ENCODE measurements at regions of chr19 and their contacts with region 1.

Region 1: GRCh38 chr19:1812469-1813196 is 557 bp upstream of the ATP8B3 start:
- DNase-seq: peak; percentile 93 to 96
- H3K4me3 ChIP-seq: peak overlapping the region in 2 of 3 donors; percentile 33 to 39
- H3K27ac ChIP-seq: peak overlapping the region in 2 of 3 donors; percentile 51 to 52
- H3K4me1 ChIP-seq: peaks cover 14 to 19% of the 10 kb centered on the region in 2 donors
- H3K27me3 ChIP-seq: no peaks in the 10 kb centered on the region
- CTCF ChIP-seq: peak in 4 of 6 experiments; percentile 42 to 55 (median 48)
- POLR2A ChIP-seq: peak in 1 of 2 donors; percentile 35

Region 2: DNA sequence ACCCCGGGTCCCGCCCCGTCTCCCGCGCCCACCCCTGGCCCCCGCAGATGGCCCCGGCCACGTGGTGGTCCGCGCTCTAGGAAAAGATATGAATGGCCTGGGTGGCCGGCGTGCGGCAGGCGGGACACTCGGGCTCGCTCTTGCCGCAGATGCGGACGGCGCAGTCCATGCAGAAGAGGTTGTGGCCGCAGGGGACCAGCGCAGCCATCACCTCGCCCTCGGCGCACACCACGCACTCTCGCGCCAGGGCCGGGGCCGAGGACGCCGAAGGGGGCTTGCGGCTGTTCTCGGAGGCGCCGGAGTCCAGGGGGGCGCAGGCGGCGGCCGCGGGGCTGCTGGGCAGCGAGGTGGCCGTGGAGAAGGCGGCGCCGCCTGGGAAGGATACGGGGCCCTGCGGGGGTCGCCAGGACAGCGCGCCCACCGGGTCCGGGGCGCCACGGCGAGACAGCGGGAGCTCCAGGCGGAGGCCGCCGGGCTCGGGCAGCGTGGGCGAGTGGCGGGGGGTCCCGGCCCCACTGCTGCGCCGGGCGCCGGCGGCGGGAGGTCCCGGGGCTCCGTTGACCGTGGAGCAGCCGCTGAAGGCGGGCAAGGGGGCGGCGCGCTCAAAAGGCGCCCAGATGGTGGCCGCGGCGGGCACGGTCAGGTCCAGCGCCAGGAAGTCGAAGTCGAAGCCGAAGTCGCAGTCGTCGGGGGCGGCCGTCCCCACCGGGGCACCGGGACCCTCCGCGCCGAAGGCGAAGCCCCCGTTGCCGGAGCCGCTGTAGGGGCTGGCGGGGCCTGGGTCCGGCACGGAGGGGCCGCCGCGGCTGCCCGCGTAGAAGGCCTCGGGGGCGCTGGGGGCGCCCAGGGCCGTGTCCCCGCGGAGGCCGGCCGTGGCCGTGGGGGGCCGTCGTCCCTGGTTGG is 256.9 kb before region 1 on chr19:
- intact Hi-C with region 1: loop called (anchors 10 kb)
- DNase-seq: no peak
- H3K4me3 ChIP-seq: no peak overlapping the region
- H3K27ac ChIP-seq: no peak overlapping the region
- H3K4me1 ChIP-seq: no peaks in the 10 kb centered on the region
- H3K27me3 ChIP-seq: no peaks in the 10 kb centered on the region
- CTCF ChIP-seq: no peak
- POLR2A ChIP-seq: no peak

Region 3: DNA sequence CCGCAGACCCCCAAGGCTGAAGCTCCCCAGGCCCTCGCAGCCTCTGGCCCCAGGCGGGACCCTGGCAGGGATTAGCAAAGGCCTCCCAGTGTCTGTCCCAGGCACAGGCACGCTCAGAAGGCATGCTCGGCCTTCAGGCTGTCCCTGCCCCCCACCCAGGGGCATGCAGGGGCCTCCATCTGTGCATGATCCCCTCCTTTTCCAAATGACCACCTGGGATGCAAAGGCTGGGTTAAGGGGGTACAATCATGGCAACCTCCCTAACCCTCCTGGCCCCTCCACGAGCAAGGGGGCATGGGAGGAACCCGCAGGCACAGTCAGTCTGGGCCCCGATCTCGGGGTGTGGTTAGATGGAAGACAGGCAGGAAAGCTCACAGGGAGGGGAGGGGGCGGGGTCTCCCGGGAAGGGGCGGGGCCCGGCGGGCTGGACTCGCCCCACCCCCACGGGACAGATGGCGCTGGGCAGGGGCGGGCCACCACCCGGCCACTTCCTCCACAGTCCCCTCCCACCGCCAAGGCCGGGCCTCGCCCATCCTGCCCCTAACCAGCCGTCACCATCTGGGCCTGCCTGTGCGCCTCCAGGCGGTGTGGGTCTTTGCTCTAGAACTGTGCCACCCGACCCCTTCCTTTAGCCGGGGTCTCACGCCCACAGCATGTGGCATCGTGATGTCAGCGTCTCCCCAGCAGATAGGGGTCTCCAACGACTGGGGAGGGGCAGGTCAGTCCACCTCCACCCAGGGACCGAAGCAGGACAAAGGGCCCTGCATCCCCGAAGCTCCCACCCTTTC is 42.6 kb after region 1 on chr19:
- intact Hi-C with region 1: no loop called
- DNase-seq: peak; percentile 59 to 62
- H3K4me3 ChIP-seq: no peak overlapping the region
- H3K27ac ChIP-seq: peak overlapping the region; percentile 74 to 78 (median 78)
- H3K4me1 ChIP-seq: peaks cover 20 to 46% of the 10 kb centered on the region in 2 donors
- H3K27me3 ChIP-seq: no peaks in the 10 kb centered on the region
- CTCF ChIP-seq: no peak
- POLR2A ChIP-seq: peak in 1 of 2 donors; percentile 49